ENCODE measurements at regions of chr7 and their contacts with region 1.

Region 1: DNA sequence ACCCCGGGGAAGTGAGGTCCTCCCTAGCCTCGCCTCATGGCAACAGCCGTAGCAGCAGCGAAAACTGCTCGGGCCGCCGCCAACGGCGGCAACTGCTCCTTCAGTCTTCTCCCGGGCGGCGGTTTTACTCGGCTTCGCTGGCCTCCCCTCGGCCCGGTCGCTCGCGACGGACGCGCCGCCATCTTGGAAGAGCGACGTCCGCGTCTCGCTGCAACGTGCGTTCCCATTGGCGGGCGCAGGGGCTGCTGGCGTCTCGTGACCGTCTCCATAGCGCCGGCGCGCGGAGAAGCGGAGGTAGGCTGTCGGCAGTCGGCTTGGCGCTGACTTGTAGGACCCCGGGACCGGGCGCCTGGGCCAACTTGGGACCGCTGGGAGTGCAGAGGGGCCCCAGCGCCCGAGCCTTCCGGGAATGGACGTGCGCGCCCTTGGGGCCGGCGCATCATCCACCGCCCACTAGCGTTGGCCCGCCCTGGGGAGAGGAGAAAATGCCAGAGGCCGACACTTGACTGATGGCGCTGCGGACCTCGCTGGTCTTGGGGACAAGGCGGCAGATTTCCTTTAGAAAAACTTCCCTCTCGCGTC is at the start of gene SNX13:
- DNase-seq: peak; percentile 95 to 96
- H3K4me3 ChIP-seq: peak within 1 kb of the TSS; percentile 99
- H3K4me3 Mint-ChIP-seq: peak within 1 kb of the TSS; percentile 100
- H3K27ac Mint-ChIP-seq: peak within 1 kb of the TSS; percentile 100
- H3K4me1 ChIP-seq: 0 out of 2 replicates have a peak, but pooled peaks cover 8% of the 10 kb centered on the region
- H3K4me1 Mint-ChIP-seq: peaks cover 24% of the 10 kb centered on the region
- H3K27me3 ChIP-seq: no peaks in the 10 kb centered on the region
- H3K27me3 Mint-ChIP-seq: no peaks in the 10 kb centered on the region
- CTCF ChIP-seq: peak; percentile 25 to 27
- total RNA-seq, gene SNX13: 36.6 and 41.8 TPM in 2 replicates

Region 2: GRCh38 chr7:17971411-17971810 is 31.0 kb after region 1 on chr7:
- CTCF ChIA-PET with region 1: no interaction called
- POLR2A ChIA-PET with region 1: no interaction called
- intact Hi-C with region 1: loop called (anchors 1 kb)
- DNase-seq: no peak
- H3K4me3 ChIP-seq: no peak overlapping the region
- H3K4me3 Mint-ChIP-seq: no peak overlapping the region
- H3K27ac Mint-ChIP-seq: no peak overlapping the region
- H3K4me1 ChIP-seq: peaks cover 35% of the 10 kb centered on the region
- H3K4me1 Mint-ChIP-seq: peaks cover 16% of the 10 kb centered on the region
- H3K27me3 ChIP-seq: no peaks in the 10 kb centered on the region
- H3K27me3 Mint-ChIP-seq: no peaks in the 10 kb centered on the region
- CTCF ChIP-seq: no peak

Region 3: GRCh38 chr7:18040196-18040595 is 99.8 kb after region 1 on chr7:
- CTCF ChIA-PET with region 1: no interaction called
- POLR2A ChIA-PET with region 1: no interaction called
- intact Hi-C with region 1: no loop called
- DNase-seq: no peak
- H3K4me3 ChIP-seq: no peak overlapping the region
- H3K4me3 Mint-ChIP-seq: no peak overlapping the region
- H3K27ac Mint-ChIP-seq: no peak overlapping the region
- H3K4me1 ChIP-seq: no peaks in the 10 kb centered on the region
- H3K4me1 Mint-ChIP-seq: no peaks in the 10 kb centered on the region
- H3K27me3 ChIP-seq: no peaks in the 10 kb centered on the region
- H3K27me3 Mint-ChIP-seq: no peaks in the 10 kb centered on the region
- CTCF ChIP-seq: no peak

Measured in Caco-2 (cell line).